Activated CD4-positive, alpha-beta T cell treated with anti-CD3 and anti-CD28 coated beads, Interleukin-2, amount 10 ng/mL, durations not matched to agents 24 days and 14 days (primary cell): ENCODE measurements at regions of chr7 and their contacts with region 1.

Region 1: GRCh38 chr7:30938435-30939316 is 25.1 kb upstream of the GHRHR start:
- DNase-seq: peak; percentile 92
- H3K4me3 Mint-ChIP-seq: no peak overlapping the region
- H3K27ac Mint-ChIP-seq: no peak overlapping the region
- H3K4me1 Mint-ChIP-seq: no peaks in the 10 kb centered on the region
- H3K27me3 Mint-ChIP-seq: peaks cover 37% of the 10 kb centered on the region

Region 2: DNA sequence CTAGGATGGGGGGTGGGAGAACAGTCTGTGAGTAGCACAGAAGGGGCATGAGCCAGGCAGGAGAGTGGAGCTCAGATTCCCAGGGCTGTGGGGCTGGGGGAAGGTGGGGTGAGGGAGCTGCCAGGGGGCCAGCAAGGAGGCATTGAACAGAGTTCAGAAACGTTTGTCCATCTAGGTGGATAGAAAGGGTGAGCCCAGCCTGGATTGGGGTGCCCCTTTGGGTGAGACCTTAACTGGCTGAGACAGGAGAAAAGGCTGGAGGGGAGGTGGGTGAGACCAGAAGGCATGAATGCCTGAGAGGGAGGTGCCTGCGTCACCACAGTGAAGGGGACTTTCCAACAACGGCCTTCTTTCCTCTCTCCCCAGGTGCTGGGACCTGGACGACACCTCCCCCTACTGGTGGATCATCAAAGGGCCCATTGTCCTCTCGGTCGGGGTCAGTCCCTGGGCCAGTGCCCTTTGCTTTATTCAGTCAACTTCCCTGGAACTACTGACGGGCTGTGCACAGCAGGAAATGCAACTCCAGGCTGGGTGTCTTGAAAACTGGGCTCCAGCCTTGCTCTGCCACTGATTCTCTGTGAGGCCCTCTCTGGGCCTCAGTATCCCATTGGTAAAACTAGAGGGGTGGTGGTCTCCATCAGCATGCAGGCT is 36.1 kb after region 1 on chr7:
- intact Hi-C with region 1: loop called (anchors 1 kb)
- DNase-seq: peak; percentile 90
- H3K4me3 Mint-ChIP-seq: no peak overlapping the region
- H3K27ac Mint-ChIP-seq: peak overlapping the region; percentile 69
- H3K4me1 Mint-ChIP-seq: peaks cover 7% of the 10 kb centered on the region
- H3K27me3 Mint-ChIP-seq: peaks cover 16% of the 10 kb centered on the region

Region 3: DNA sequence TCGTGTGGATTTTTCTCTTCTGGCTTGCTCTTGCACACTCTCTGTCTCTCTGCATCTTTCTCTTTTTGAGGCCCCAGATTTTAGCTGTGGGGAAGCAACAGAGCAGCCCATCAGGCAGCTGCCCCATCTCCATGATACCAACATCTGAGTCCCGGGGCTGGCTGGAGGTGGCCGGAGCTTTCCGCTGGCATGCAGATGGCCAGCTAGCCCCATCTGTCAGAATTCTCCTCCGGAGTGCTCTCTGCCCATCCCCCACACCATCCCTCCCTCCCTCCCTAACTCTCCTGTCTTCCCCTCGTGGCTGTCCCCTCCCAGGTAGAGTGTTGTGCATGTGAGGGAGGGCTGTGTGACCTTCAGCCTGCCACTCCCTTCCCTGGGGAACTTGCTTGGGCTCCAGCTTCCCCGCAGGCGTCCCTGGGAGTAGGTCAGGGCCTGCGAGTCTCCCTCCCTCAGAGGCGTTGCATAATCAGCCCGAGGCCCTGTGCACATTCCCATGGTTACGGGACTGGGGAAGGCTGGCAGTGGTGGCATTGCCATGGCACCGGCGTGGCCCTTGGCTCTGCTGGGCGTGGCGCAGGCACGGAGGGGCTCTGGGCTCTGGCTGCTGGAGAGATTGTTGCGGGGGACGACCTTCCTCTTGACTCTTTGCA is 49.8 kb after region 1 on chr7:
- intact Hi-C with region 1: no loop called
- DNase-seq: no peak
- H3K4me3 Mint-ChIP-seq: no peak overlapping the region
- H3K27ac Mint-ChIP-seq: peak overlapping the region; percentile 42
- H3K4me1 Mint-ChIP-seq: peaks cover 5% of the 10 kb centered on the region
- H3K27me3 Mint-ChIP-seq: peaks cover 28% of the 10 kb centered on the region